CD8-positive, alpha-beta T cell (primary cell): ENCODE measurements at regions of chr11 and their contacts with region 1.

Region 1: DNA sequence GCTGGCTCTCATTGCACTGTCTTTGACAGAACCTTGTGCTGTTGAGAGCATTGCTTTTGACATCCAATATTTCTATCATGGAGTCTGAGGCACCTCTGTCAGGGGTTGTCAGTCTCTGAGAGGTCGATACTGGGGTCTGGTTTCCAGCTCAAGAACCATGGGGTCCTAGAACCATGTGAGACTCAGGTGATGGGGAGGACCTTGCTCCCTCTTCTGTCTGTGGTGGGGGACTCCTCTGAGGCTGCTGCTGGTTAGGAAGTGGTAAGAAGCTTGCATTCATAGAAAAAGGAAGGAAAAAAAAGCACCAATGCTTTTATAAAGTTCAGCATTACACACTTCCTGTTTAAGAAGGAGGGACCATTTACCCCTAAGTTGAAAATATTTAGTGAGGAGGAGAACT is 91.8 kb upstream of the CD44 start:
- DNase-seq: peak in 8 of 9 experiments; percentile 26 to 92 (median 68)
- ATAC-seq: peak; percentile 62
- H3K4me3 ChIP-seq: no peak overlapping the region
- H3K4me3 Mint-ChIP-seq: peak overlapping the region; percentile 36
- H3K27ac ChIP-seq: peak overlapping the region; percentile 53 to 96
- H3K27ac Mint-ChIP-seq: peak overlapping the region; percentile 100
- H3K4me1 ChIP-seq: peaks cover 69% of the 10 kb centered on the region
- H3K4me1 Mint-ChIP-seq: peaks cover 80% of the 10 kb centered on the region
- H3K27me3 ChIP-seq: no peaks in the 10 kb centered on the region
- H3K27me3 Mint-ChIP-seq: no peaks in the 10 kb centered on the region
- CTCF ChIP-seq: no peak

Region 2: GRCh38 chr11:35066783-35067423 is 19.7 kb after region 1 on chr11:
- CTCF ChIA-PET with region 1: interaction called, 6 read pairs
- POLR2A ChIA-PET with region 1: interaction called, 5 read pairs
- intact Hi-C with region 1: loop called in 1 of 2 experiments (anchors 2 kb)
- DNase-seq: peak in 3 of 9 experiments; percentile 46 to 81 (median 67)
- ATAC-seq: peak; percentile 79
- H3K4me3 ChIP-seq: no peak overlapping the region
- H3K4me3 Mint-ChIP-seq: peak overlapping the region; percentile 46
- H3K27ac ChIP-seq: peak overlapping the region in 1 of 2 experiments; percentile 42
- H3K27ac Mint-ChIP-seq: peak overlapping the region; percentile 70
- H3K4me1 ChIP-seq: peaks cover 24% of the 10 kb centered on the region
- H3K4me1 Mint-ChIP-seq: peaks cover 31% of the 10 kb centered on the region
- H3K27me3 ChIP-seq: no peaks in the 10 kb centered on the region
- H3K27me3 Mint-ChIP-seq: no peaks in the 10 kb centered on the region
- CTCF ChIP-seq: no peak

Region 3: DNA sequence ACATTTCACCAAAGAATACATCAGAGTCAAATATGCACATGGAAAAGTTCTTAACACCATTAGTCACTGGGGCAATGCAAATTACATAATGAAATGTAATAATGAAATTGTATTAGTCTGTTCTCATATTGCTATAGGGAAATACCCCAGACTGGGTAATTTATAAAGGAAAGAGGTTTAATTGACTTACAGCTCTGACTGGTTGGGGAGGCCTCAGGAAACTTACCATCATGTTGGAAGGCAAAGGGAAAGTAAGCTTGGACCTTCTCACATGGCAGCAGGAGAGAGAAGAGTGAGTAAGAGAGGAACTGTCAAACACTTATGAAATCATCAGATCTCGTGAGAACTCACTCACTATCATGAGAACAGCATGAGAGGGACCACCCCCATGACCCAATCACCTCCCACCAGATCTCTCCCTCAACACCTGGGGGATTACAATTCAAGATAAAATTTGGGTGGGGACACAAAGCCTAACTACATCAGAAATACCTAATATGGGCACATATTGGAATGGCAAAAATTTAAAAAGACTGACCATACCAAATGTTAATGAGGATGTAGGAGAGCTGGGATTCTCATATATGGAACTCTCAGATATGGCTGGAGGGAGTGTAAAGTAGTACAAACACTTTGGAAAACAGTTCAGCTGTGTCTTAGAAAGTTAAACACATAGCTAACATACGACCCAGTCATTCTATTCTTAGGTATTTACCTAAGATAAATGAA is 26.7 kb after region 1 on chr11:
- CTCF ChIA-PET with region 1: no interaction called
- POLR2A ChIA-PET with region 1: interaction called, 12 read pairs
- intact Hi-C with region 1: loop called (anchors 1 kb)
- DNase-seq: no peak
- ATAC-seq: no peak
- H3K4me3 ChIP-seq: no peak overlapping the region
- H3K4me3 Mint-ChIP-seq: no peak overlapping the region
- H3K27ac ChIP-seq: no peak overlapping the region
- H3K27ac Mint-ChIP-seq: no peak overlapping the region
- H3K4me1 ChIP-seq: peaks cover 33% of the 10 kb centered on the region
- H3K4me1 Mint-ChIP-seq: peaks cover 50% of the 10 kb centered on the region
- H3K27me3 ChIP-seq: no peaks in the 10 kb centered on the region
- H3K27me3 Mint-ChIP-seq: no peaks in the 10 kb centered on the region
- CTCF ChIP-seq: no peak

Region 4: DNA sequence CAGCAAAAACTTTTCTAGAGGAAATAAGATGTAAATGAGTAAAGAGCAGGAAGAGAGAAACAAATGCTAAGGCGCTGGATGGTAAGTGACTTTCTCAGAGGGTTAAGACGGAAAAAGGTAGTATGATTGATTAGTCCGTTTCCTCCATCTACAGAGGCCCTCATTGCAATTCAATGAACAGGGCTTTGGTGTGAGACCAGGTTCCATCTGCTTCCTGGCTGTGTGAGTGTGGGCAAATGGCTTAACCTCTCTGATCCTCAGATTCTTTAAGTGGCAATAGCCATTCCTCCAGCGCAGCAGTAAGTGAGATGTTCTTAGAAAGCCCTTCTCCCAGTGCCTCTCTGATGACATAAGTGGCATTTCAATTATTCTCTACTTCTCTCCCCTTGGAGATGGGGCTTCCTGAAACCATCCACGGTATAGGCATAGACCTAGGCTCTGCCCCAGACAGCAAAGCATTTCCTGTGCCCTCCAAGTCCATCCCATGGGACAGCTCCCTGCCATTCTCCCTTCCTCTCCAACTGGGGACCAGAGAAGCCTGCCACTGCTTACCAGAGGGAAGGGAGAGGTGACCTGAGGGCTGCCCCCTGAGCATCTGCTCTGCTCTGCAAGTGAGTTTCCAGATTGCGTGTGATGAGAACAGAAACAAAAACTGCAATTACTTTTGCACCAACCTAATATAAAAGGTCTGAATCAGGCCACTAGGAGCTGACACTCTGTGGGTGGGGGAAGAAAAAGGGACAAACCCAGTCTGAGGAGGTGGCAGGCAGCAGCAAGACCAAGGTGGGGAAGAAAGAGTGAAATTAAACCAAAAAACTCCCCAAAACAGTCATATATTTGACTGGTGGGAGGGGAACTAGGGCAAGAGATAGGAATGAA is 79.1 kb after region 1 on chr11:
- CTCF ChIA-PET with region 1: no interaction called
- POLR2A ChIA-PET with region 1: no interaction called
- intact Hi-C with region 1: no loop called
- DNase-seq: peak in 2 of 9 experiments; percentile 48 to 58
- ATAC-seq: peak; percentile 38
- H3K4me3 ChIP-seq: no peak overlapping the region
- H3K4me3 Mint-ChIP-seq: peak overlapping the region; percentile 44
- H3K27ac ChIP-seq: no peak overlapping the region
- H3K27ac Mint-ChIP-seq: peak overlapping the region; percentile 70
- H3K4me1 ChIP-seq: peaks cover 38% of the 10 kb centered on the region
- H3K4me1 Mint-ChIP-seq: peaks cover 54% of the 10 kb centered on the region
- H3K27me3 ChIP-seq: no peaks in the 10 kb centered on the region
- H3K27me3 Mint-ChIP-seq: no peaks in the 10 kb centered on the region
- CTCF ChIP-seq: no peak